ENCODE measurements at regions of chr19 and their contacts with region 1.

Region 1: GRCh38 chr19:38929929-38930775 is at the start of gene SARS2:
- DNase-seq: peak; percentile 88 to 100 (median 92)
- ATAC-seq: peak; percentile 62 to 64
- H3K4me3 Mint-ChIP-seq: peak within 1 kb of the TSS; percentile 96 to 99 (median 98)
- H3K27ac Mint-ChIP-seq: peak within 1 kb of the TSS; percentile 95 to 100 (median 100)
- H3K4me1 Mint-ChIP-seq: peaks cover 14 to 48% (median 42%) of the 10 kb centered on the region in 4 donors
- H3K27me3 Mint-ChIP-seq: no peaks in the 10 kb centered on the region
- polyA plus RNA-seq, gene SARS2: 8.8 to 14.9 (median 14.3) TPM

Region 2: GRCh38 chr19:38402967-38403861 is 526.9 kb before region 1 on chr19 and contains the start of gene FAM98C:
- POLR2A ChIA-PET with region 1: interaction called, 23 read pairs
- DNase-seq: peak; percentile 95 to 99 (median 98)
- ATAC-seq: peak; percentile 94 to 95
- H3K4me3 Mint-ChIP-seq: peak within 1 kb of the TSS; percentile 86 to 96 (median 93)
- H3K27ac Mint-ChIP-seq: peak within 1 kb of the TSS; percentile 82 to 98 (median 94)
- H3K4me1 Mint-ChIP-seq: peaks cover 9 to 23% (median 19%) of the 10 kb centered on the region in 4 donors
- H3K27me3 Mint-ChIP-seq: peaks cover 0 to 8% (median 0%) of the 10 kb centered on the region in 5 donors
- polyA plus RNA-seq, gene FAM98C: 12.6 to 15.5 (median 15.4) TPM

Region 3: DNA sequence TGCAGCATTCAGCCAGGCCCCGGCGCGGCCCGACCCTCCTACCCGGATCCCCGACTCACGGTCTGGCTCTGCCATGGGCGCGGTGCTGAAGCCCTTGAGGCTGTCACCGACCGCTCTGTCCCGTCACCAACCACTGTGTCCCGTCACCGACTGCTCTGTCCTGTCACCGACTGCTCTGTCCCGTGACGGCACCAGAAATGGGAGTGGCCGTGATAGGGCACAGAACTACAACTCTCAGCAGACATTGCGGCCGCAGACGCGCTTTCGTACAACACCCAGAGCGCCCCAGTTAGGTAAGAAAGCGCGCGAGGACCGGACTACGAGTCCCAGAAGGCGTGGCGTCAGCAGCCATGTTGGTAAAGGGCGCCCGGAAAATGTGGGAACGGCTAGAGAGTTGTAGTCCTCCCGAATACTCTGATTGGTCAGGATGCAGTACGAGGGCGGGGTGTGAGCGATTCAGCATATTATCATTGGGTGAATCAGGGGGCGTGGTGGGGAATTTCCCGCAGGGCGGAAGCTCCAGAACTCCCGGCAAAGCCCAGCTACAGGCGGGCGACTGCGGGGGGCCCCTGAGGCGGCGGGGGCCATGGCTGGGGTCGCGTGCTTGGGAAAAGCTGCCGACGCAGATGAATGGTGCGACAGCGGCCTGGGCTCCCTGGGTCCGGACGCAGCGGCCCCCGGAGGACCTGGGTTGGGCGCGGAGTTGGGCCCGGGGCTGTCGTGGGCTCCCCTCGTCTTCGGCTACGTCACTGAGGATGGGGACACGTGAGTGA is 30.5 kb before region 1 on chr19 and contains the starts of genes NFKBIB and SIRT2:
- POLR2A ChIA-PET with region 1: interaction called, 12 read pairs
- DNase-seq: peak; percentile 91 to 100 (median 99)
- ATAC-seq: peak; percentile 89
- H3K4me3 Mint-ChIP-seq: peak within 1 kb of the TSS; percentile 86 to 100 (median 97)
- H3K27ac Mint-ChIP-seq: peak within 1 kb of the TSS; percentile 93 to 100 (median 99)
- H3K4me1 Mint-ChIP-seq: peaks cover 22 to 61% (median 55%) of the 10 kb centered on the region in 4 donors
- H3K27me3 Mint-ChIP-seq: no peaks in the 10 kb centered on the region
- polyA plus RNA-seq, gene NFKBIB: 7.9 to 12.9 (median 9.5) TPM
- polyA plus RNA-seq, gene SIRT2: 28.2 to 48.0 (median 33.5) TPM

Region 4: DNA sequence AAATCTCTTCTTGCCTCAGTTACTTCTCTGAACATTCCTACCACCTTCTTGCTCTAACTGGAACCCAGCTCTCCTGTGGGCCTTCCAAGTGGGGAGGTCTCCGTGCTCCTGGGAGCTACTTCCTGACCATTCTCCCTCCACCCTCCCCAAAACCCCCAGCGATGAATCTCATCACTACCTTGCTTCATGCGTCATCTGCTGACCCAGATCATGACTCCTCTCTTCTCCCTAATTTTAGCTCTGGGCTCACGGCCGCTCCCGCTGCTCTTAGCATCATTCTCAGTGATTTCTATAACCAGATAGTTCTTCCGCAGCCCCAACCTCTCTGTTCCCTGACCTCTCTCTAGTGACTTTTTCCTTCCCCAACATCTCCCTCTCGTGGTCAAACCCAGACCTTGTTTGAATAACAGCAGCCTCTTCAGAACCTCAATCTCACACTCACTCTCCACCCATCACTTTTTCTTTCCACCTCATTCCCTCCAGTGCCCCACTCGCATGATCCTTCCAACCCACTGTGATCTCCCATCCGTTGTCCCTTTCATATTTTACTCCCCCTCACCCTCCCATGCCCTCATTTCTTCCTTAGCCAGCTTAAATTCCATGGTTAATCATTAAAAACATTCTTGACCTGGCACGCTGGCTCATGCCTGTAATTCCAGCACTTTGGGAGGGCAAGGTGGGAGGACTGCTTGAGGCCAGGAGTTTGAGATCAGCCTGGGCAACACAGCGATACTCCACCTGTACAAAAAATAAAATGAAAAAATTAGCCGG is 22.4 kb after region 1 on chr19:
- POLR2A ChIA-PET with region 1: no interaction called
- DNase-seq: peak in 6 of 10 donors; percentile 26 to 43 (median 32)
- ATAC-seq: no peak
- H3K4me3 Mint-ChIP-seq: peak overlapping the region in 6 of 10 donors; percentile 4 to 54 (median 10)
- H3K27ac Mint-ChIP-seq: peak overlapping the region in 2 of 10 donors; percentile 4 to 33
- H3K4me1 Mint-ChIP-seq: peaks cover 5 to 20% (median 14%) of the 10 kb centered on the region in 4 donors
- H3K27me3 Mint-ChIP-seq: peaks cover 9 to 32% (median 18%) of the 10 kb centered on the region in 5 donors

Measured in naive thymus-derived CD8-positive, alpha-beta T cell (primary cell).